ENCODE measurements at regions of chr6 and their contacts with region 1.

Region 1: DNA sequence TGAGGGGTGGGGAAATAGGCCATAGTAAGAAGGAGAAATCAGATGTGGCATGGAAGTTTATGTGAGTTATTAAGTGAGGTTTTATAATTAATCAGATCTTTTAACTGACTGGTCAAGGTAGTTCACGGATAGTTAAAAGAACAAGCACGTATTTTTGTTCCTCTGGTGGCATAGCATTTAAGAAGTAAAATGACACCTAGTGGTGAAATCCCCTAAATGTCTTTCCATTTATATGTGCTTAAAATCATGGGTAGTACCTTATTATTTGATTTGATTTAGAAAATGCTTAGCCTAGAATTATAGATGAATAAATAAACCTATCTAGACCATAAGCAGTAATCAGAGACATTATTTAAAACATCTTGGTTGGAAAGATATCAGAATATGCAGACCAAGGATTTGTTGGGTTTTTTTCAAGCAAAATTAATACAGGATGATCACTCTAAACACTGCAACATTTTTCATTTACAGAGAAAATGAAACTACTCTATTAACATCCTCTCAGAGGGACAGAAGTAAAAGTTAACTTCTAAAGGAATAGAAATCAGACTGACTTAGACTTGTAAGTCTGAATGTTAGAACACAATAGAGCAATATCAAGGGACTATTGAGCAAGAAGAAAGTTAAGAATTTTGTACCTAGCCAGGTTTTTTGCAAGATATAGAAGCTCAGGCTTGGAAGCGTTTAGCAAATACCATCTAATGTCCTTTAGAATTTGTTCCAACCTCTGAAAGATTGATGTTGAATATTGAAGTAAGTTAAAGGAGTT is 81.1 kb downstream of the STXBP5 start:
- DNase-seq: no peak
- H3K4me3 Mint-ChIP-seq: no peak overlapping the region
- H3K27ac Mint-ChIP-seq: no peak overlapping the region
- H3K4me1 Mint-ChIP-seq: peaks cover 34% of the 10 kb centered on the region
- H3K27me3 Mint-ChIP-seq: no peaks in the 10 kb centered on the region

Region 2: GRCh38 chr6:146850238-146850896 is 434.9 kb before region 1 on chr6:
- CTCF ChIA-PET with region 1: no interaction called
- intact Hi-C with region 1: loop called (anchors 1 kb)
- DNase-seq: peak; percentile 72
- H3K4me3 Mint-ChIP-seq: no peak overlapping the region
- H3K27ac Mint-ChIP-seq: peak overlapping the region; percentile 71
- H3K4me1 Mint-ChIP-seq: peaks cover 31% of the 10 kb centered on the region
- H3K27me3 Mint-ChIP-seq: peaks cover 7% of the 10 kb centered on the region

Region 3: DNA sequence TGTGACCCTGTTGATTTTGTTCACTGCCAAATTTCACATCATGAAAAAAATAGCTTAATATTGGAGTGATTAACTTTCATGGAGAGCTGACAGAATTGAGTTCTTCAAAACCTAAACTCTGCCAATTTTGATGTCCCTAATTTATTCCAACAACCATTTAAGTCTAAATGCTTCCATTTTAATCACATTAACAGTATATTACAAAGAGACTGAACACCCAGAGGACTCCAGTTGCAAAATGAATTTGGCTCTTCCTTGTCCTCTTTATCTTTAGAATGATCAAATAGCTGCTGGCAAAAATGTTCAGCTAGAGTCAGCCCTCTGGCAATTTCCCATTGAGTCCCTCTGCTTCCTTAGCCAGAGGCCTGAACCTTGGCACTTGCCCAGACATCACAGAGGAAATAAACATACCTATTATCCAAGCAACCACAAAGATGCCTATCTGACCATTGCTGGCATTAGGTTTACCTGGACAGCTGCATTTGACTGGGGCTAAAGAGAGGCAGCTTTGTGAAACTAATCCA is 380.0 kb before region 1 on chr6:
- CTCF ChIA-PET with region 1: interaction called, 7 read pairs
- intact Hi-C with region 1: loop called (anchors 1 kb)
- DNase-seq: no peak
- H3K4me3 Mint-ChIP-seq: no peak overlapping the region
- H3K27ac Mint-ChIP-seq: no peak overlapping the region
- H3K4me1 Mint-ChIP-seq: no peaks in the 10 kb centered on the region
- H3K27me3 Mint-ChIP-seq: peaks cover under 1% of the 10 kb centered on the region

Region 4: GRCh38 chr6:147106759-147107401 is 178.4 kb before region 1 on chr6:
- CTCF ChIA-PET with region 1: no interaction called
- intact Hi-C with region 1: loop called (anchors 5 kb)
- DNase-seq: no peak
- H3K4me3 Mint-ChIP-seq: no peak overlapping the region
- H3K27ac Mint-ChIP-seq: no peak overlapping the region
- H3K4me1 Mint-ChIP-seq: peaks cover 55% of the 10 kb centered on the region
- H3K27me3 Mint-ChIP-seq: no peaks in the 10 kb centered on the region

Region 5: DNA sequence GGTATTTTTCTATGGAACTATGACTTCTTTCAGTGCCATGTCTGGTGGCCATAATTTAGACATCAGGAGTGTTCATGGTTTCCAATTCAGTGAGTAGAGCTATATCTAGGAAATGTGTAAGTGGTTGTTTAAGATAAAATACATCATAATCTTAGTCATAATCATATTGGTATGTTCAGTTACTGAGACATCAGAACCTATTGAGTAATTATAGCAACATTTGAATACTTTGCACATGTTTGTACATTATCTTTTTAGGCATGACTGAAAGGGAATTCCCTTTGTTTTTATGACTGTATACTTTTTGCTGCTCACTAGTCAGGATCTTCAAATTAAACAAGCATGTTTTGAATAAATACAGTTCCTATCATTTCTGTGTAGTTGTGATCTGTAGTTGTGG is 17.0 kb before region 1 on chr6:
- CTCF ChIA-PET with region 1: interaction called, 3 read pairs
- intact Hi-C with region 1: loop called (anchors 1 kb)
- DNase-seq: no peak
- H3K4me3 Mint-ChIP-seq: no peak overlapping the region
- H3K27ac Mint-ChIP-seq: peak overlapping the region; percentile 83
- H3K4me1 Mint-ChIP-seq: peaks cover 17% of the 10 kb centered on the region
- H3K27me3 Mint-ChIP-seq: no peaks in the 10 kb centered on the region

Region 6: DNA sequence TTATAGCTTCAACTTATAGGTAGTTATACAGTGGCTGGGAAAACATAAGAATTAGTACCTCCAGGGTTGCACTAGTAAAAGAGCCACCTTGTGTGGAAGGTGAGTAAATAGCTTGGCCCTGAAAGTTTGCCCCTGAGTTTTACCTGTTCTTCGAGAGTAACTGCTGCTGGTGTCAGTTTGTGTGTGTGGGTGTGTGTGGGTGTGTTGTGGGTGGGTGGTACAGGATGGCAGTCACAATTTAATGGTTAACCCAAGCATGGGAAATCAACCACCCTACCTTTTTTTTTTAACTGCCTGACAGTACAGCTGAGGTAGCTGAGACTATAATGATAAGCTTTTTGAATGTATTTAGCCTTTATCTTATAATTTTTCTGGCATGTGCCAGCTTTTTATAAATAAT is 56.2 kb after region 1 on chr6:
- CTCF ChIA-PET with region 1: no interaction called
- intact Hi-C with region 1: no loop called
- DNase-seq: no peak
- H3K4me3 Mint-ChIP-seq: no peak overlapping the region
- H3K27ac Mint-ChIP-seq: no peak overlapping the region
- H3K4me1 Mint-ChIP-seq: peaks cover 2% of the 10 kb centered on the region
- H3K27me3 Mint-ChIP-seq: no peaks in the 10 kb centered on the region

Measured in activated naive CD4-positive, alpha-beta T cell treated with anti-CD3 and anti-CD28 coated beads for 36 hours (primary cell).